ENCODE measurements at regions of chr6 and their contacts with region 1.

Region 1: GRCh38 chr6:149545754-149546528 is at the start of gene PPIL4:
- DNase-seq: peak; percentile 93 to 99 (median 96)
- ATAC-seq: peak; percentile 88
- H3K4me3 ChIP-seq: peak within 1 kb of the TSS; percentile 86 to 92
- H3K4me3 Mint-ChIP-seq: peak within 1 kb of the TSS; percentile 100
- H3K27ac ChIP-seq: peak within 1 kb of the TSS; percentile 99 to 100
- H3K27ac Mint-ChIP-seq: peak within 1 kb of the TSS; percentile 100
- H3K4me1 ChIP-seq: peaks cover 23% of the 10 kb centered on the region
- H3K4me1 Mint-ChIP-seq: peaks cover 38% of the 10 kb centered on the region
- H3K27me3 ChIP-seq: no peaks in the 10 kb centered on the region
- H3K27me3 Mint-ChIP-seq: no peaks in the 10 kb centered on the region
- CTCF ChIP-seq: peak; percentile 98
- total RNA-seq, gene PPIL4: 59.1 to 59.4 TPM

Region 2: DNA sequence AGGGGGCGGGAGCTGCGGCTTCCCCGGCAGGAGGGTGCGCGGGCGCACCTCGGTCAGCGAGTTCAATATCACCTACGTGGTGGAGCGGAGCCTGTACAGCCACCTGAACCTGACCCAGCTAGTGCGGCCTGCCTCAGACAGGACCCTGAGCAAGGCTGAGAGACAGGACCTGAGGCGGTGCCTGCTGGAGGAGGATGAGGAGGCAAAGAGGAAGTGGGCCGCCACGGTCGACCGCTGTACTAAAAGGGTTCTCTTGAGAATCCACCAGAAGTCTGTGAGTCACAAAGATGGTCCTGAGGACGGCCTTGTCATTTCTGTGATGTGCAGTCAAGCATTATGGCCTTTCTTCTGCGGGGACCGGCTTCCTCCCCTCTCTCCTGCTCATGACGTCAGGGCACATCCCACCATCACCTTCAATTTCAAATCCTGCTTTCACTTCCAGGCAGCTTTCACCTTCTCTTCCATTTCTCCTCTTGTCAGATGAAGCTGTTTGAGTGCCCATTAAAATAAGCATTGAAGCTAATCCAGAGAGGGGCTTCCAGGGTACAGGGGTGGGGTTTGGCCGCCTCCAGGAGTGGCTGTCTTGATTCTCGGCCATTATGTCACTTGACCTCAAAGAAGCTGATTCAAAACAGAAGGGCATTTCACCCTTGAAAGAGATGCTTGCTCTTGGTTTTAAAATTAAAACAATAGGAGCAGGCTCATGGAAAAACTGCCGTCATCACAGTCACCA is 1025.7 kb before region 1 on chr6:
- CTCF ChIA-PET with region 1: no interaction called
- POLR2A ChIA-PET with region 1: no interaction called
- intact Hi-C with region 1: no loop called
- DNase-seq: peak in 1 of 9 experiments; percentile 9
- ATAC-seq: no peak
- H3K4me3 ChIP-seq: no peak overlapping the region
- H3K4me3 Mint-ChIP-seq: no peak overlapping the region
- H3K27ac ChIP-seq: no peak overlapping the region
- H3K27ac Mint-ChIP-seq: no peak overlapping the region
- H3K4me1 ChIP-seq: no peaks in the 10 kb centered on the region
- H3K4me1 Mint-ChIP-seq: no peaks in the 10 kb centered on the region
- H3K27me3 ChIP-seq: no peaks in the 10 kb centered on the region
- H3K27me3 Mint-ChIP-seq: peaks cover 1% of the 10 kb centered on the region
- CTCF ChIP-seq: no peak

Region 3: DNA sequence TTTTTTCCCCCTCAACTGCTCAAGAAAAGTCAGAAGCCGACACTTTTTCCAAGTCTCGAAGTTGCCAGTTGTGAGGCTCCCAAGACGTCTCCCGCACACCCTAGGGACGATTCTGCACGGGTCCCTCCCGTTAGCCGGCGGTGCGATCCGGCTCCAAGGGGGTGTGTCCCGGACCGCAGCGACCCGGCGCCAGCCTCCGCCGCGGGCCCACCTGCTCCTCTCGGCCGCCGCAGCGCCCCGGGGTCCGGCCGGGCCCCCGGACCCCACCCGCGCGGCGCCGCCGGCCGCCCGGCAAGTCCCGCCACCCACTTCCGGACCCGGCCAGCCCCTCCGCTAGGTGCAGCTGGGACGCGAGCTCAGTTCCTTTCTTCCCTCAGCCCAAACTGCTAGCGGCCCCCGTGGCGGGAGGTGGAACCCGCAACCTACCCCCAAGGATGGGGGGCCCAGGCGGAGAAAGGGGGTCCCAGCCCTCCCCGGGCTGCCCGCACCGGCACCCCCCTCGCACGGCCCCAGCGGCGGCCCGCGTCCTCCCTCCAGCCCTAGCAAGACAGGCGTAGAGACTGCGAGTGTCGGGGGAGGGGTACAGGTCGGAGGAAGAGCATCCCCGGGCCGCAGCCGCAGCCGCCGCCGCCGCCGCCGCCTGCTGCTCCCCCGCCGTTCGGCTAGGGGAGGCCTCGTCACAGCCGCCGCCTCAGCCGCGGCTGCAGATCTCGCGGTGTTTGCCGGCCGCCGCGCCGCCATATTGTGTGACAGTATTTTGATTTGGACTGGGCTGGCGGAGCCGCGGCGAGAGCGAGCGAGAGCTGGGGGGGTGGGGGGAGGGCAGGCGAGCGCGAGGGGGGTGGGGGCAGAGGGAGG is 228.9 kb before region 1 on chr6:
- CTCF ChIA-PET with region 1: no interaction called
- POLR2A ChIA-PET with region 1: no interaction called
- intact Hi-C with region 1: loop called in 1 of 2 experiments (anchors 10 kb)
- DNase-seq: peak; percentile 77 to 96 (median 87)
- ATAC-seq: peak; percentile 70
- H3K4me3 ChIP-seq: peak overlapping the region; percentile 71 to 78
- H3K4me3 Mint-ChIP-seq: peak overlapping the region; percentile 89
- H3K27ac ChIP-seq: peak overlapping the region; percentile 75 to 87
- H3K27ac Mint-ChIP-seq: peak overlapping the region; percentile 88
- H3K4me1 ChIP-seq: peaks cover 32% of the 10 kb centered on the region
- H3K4me1 Mint-ChIP-seq: peaks cover 39% of the 10 kb centered on the region
- H3K27me3 ChIP-seq: no peaks in the 10 kb centered on the region
- H3K27me3 Mint-ChIP-seq: no peaks in the 10 kb centered on the region
- CTCF ChIP-seq: no peak

Region 4: GRCh38 chr6:149565527-149566409 is 19.8 kb after region 1 on chr6 and contains the start of gene GINM1:
- CTCF ChIA-PET with region 1: interaction called, 18 read pairs
- POLR2A ChIA-PET with region 1: interaction called, 15 read pairs
- intact Hi-C with region 1: loop called (anchors 1 kb)
- DNase-seq: peak; percentile 91 to 97 (median 94)
- ATAC-seq: peak; percentile 83
- H3K4me3 ChIP-seq: peak within 1 kb of the TSS; percentile 84 to 98
- H3K4me3 Mint-ChIP-seq: peak within 1 kb of the TSS; percentile 88
- H3K27ac ChIP-seq: peak within 1 kb of the TSS; percentile 75 to 88
- H3K27ac Mint-ChIP-seq: peak within 1 kb of the TSS; percentile 95
- H3K4me1 ChIP-seq: peaks cover 7% of the 10 kb centered on the region
- H3K4me1 Mint-ChIP-seq: peaks cover 18% of the 10 kb centered on the region
- H3K27me3 ChIP-seq: no peaks in the 10 kb centered on the region
- H3K27me3 Mint-ChIP-seq: no peaks in the 10 kb centered on the region
- CTCF ChIP-seq: peak; percentile 78
- total RNA-seq, gene GINM1: 32.7 to 35.2 TPM

Region 5: GRCh38 chr6:149717588-149718458 is 171.9 kb after region 1 on chr6 and contains the start of gene LATS1:
- CTCF ChIA-PET with region 1: no interaction called
- POLR2A ChIA-PET with region 1: interaction called, 8 read pairs
- intact Hi-C with region 1: loop called (anchors 1 to 2 kb)
- DNase-seq: peak; percentile 79 to 96 (median 91)
- ATAC-seq: peak; percentile 89
- H3K4me3 ChIP-seq: peak within 1 kb of the TSS; percentile 66 to 91
- H3K4me3 Mint-ChIP-seq: peak within 1 kb of the TSS; percentile 86
- H3K27ac ChIP-seq: peak within 1 kb of the TSS; percentile 86 to 94
- H3K27ac Mint-ChIP-seq: peak within 1 kb of the TSS; percentile 96
- H3K4me1 ChIP-seq: peaks cover 27% of the 10 kb centered on the region
- H3K4me1 Mint-ChIP-seq: peaks cover 43% of the 10 kb centered on the region
- H3K27me3 ChIP-seq: peaks cover 0 to 2% of the 10 kb centered on the region in 2 experiments
- H3K27me3 Mint-ChIP-seq: no peaks in the 10 kb centered on the region
- CTCF ChIP-seq: no peak
- total RNA-seq, gene LATS1: 37.2 to 39.1 TPM

Region 6: GRCh38 chr6:149863697-149864577 is 318.0 kb after region 1 on chr6 and contains the start of gene LRP11:
- CTCF ChIA-PET with region 1: no interaction called
- POLR2A ChIA-PET with region 1: no interaction called
- intact Hi-C with region 1: loop called (anchors 1 to 10 kb)
- DNase-seq: peak; percentile 65 to 87 (median 77)
- ATAC-seq: peak; percentile 90
- H3K4me3 ChIP-seq: peak within 1 kb of the TSS; percentile 38 to 60
- H3K4me3 Mint-ChIP-seq: peak within 1 kb of the TSS; percentile 85
- H3K27ac ChIP-seq: peak within 1 kb of the TSS in 1 of 2 experiments; percentile 18
- H3K27ac Mint-ChIP-seq: no peak within 1 kb of the TSS
- H3K4me1 ChIP-seq: peaks cover 7% of the 10 kb centered on the region
- H3K4me1 Mint-ChIP-seq: peaks cover 11% of the 10 kb centered on the region
- H3K27me3 ChIP-seq: peaks cover 3 to 4% of the 10 kb centered on the region in 2 experiments
- H3K27me3 Mint-ChIP-seq: peaks cover 34% of the 10 kb centered on the region
- CTCF ChIP-seq: no peak
- total RNA-seq, gene LRP11: 0.17 TPM in 1 of 2 experiments, not detected in the other

Measured in CD8-positive, alpha-beta T cell (primary cell).